ENCODE measurements at regions of chr7 and their contacts with region 1.

Region 1: DNA sequence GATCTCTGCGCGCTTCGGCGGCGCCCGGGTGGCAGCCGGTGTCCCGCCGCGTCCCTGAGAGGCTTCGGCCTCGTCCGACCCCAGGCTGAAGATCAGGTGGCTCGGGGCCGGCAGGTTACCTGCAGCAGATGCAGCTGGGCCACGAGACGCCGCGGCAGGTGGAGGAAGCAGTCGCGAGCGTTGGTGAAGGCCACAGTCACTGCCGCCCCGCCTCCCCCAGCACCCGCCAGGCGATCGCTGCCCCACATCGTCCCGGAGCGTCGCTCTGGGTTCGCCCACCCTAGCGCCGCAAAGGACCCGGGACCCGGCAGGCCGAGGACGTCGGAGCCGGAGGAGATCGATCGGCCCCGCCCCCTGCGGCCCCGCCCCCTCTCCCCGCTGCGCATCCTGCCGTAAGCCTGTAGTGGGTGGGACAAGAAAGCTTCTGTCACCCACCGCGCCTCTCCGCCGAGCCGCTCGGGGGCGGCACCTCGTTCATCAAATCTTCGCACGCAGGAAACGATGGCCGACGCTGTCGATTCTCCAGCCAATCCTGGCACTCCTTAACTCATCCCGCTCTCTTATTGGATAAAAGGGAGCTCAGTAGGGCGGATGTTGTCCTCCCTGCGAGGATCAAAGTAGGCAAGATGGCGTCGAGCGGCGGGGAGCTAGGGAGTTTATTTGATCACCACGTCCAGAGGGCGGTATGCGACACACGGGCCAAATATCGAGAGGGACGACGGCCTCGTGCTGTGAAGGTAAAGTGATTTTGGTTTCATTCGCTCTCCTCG is at the starts of genes PEX1 and RBM48:
- DNase-seq: peak; percentile 93 to 98 (median 98)
- H3K4me3 ChIP-seq: peak within 1 kb of the TSS; percentile 92 to 97
- H3K4me3 Mint-ChIP-seq: peak within 1 kb of the TSS; percentile 93 to 99 (median 96)
- H3K27ac ChIP-seq: peak within 1 kb of the TSS; percentile 91
- H3K27ac Mint-ChIP-seq: peak within 1 kb of the TSS; percentile 87 to 100 (median 98)
- H3K4me1 ChIP-seq: peaks cover 33% of the 10 kb centered on the region
- H3K4me1 Mint-ChIP-seq: peaks cover 31 to 52% (median 38%) of the 10 kb centered on the region in 4 donors
- H3K27me3 ChIP-seq: no peaks in the 10 kb centered on the region
- H3K27me3 Mint-ChIP-seq: no peaks in the 10 kb centered on the region
- total RNA-seq, gene PEX1: 35.4 to 38.0 TPM
- total RNA-seq, gene RBM48: 37.5 to 37.9 TPM

Region 2: GRCh38 chr7:91940572-91941341 is 587.6 kb before region 1 on chr7 and contains the start of gene AKAP9:
- CTCF ChIA-PET with region 1: no interaction called
- POLR2A ChIA-PET with region 1: interaction called, 18 read pairs
- intact Hi-C with region 1: loop called (anchors 2 kb)
- DNase-seq: peak; percentile 88 to 90 (median 89)
- H3K4me3 ChIP-seq: peak within 1 kb of the TSS; percentile 75 to 92
- H3K4me3 Mint-ChIP-seq: peak within 1 kb of the TSS; percentile 91 to 100 (median 96)
- H3K27ac ChIP-seq: peak within 1 kb of the TSS; percentile 92
- H3K27ac Mint-ChIP-seq: peak within 1 kb of the TSS; percentile 94 to 100 (median 98)
- H3K4me1 ChIP-seq: peaks cover 39% of the 10 kb centered on the region
- H3K4me1 Mint-ChIP-seq: peaks cover 22 to 59% (median 37%) of the 10 kb centered on the region in 4 donors
- H3K27me3 ChIP-seq: no peaks in the 10 kb centered on the region
- H3K27me3 Mint-ChIP-seq: peaks cover 0 to 1% of the 10 kb centered on the region in 2 donors
- total RNA-seq, gene AKAP9: 88.5 to 91.4 TPM

Region 3: DNA sequence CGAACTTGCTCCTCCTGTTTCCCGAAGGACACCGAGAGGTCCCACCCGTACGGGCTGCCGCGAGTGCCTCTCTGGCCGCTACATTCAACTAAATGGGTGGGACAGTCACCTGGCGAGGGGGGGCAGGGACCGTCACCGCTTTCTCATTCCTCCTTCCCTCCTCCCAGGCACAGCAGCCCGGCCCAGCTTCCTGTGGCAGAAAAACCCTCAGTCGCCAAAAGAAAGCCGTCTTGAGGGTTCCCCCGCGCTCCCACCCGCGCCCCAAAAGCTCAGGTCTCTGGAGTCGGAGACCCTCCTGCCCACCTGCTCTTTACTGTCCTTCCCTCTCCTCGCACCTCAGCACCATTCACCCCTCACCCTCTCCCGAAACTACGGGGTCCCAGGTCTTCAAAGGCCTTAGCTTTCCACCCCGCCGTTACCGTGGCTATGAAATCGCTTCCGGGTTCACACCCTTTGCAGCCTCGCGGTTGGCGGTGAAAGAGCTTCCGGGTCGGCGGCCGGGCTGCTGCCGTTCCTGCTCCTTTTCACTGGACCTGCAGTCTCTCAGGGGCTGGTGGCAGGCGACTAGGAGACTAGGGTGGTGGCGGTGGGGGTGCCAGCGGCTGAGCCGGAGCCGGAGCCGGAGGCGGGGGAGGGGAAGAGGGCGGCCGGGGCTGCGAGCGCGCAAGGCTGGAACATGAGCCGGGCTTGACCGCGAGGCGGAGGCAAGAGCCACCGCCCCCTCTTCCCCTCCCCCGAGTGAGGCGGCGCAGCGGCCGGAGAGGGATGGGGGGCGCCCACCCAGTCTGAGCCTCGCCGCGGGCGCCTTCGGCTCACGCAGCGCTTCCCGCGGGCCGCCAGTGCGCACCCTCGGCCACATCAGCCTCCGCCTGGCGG is 282.6 kb before region 1 on chr7 and contains the starts of genes ANKIB1 and KRIT1:
- CTCF ChIA-PET with region 1: interaction called, 4 read pairs
- POLR2A ChIA-PET with region 1: interaction called, 13 read pairs
- intact Hi-C with region 1: loop called (anchors 1 kb)
- DNase-seq: peak; percentile 86 to 91 (median 88)
- H3K4me3 ChIP-seq: peak within 1 kb of the TSS; percentile 91 to 98
- H3K4me3 Mint-ChIP-seq: peak within 1 kb of the TSS; percentile 94 to 100 (median 99)
- H3K27ac ChIP-seq: peak within 1 kb of the TSS; percentile 97
- H3K27ac Mint-ChIP-seq: peak within 1 kb of the TSS; percentile 98 to 100 (median 100)
- H3K4me1 ChIP-seq: peaks cover 43% of the 10 kb centered on the region
- H3K4me1 Mint-ChIP-seq: peaks cover 26 to 49% (median 37%) of the 10 kb centered on the region in 4 donors
- H3K27me3 ChIP-seq: no peaks in the 10 kb centered on the region
- H3K27me3 Mint-ChIP-seq: no peaks in the 10 kb centered on the region
- total RNA-seq, gene ANKIB1: 77.7 to 78.5 TPM
- total RNA-seq, gene KRIT1: 66.0 to 80.7 TPM

Region 4: GRCh38 chr7:92517631-92518030 is 10.7 kb before region 1 on chr7:
- CTCF ChIA-PET with region 1: interaction called, 10 read pairs
- POLR2A ChIA-PET with region 1: interaction called, 4 read pairs
- intact Hi-C with region 1: no loop called
- DNase-seq: no peak
- H3K4me3 ChIP-seq: no peak overlapping the region
- H3K4me3 Mint-ChIP-seq: no peak overlapping the region
- H3K27ac ChIP-seq: no peak overlapping the region
- H3K27ac Mint-ChIP-seq: peak overlapping the region in 1 of 7 donors; percentile 53
- H3K4me1 ChIP-seq: no peaks in the 10 kb centered on the region
- H3K4me1 Mint-ChIP-seq: peaks cover 0 to 7% (median 2%) of the 10 kb centered on the region in 4 donors
- H3K27me3 ChIP-seq: no peaks in the 10 kb centered on the region
- H3K27me3 Mint-ChIP-seq: no peaks in the 10 kb centered on the region

Region 5: GRCh38 chr7:92609921-92610518 is 81.6 kb after region 1 on chr7:
- CTCF ChIA-PET with region 1: interaction called, 7 read pairs
- POLR2A ChIA-PET with region 1: interaction called, 5 read pairs
- intact Hi-C with region 1: loop called (anchors 1 kb)
- DNase-seq: peak in 2 of 5 donors; percentile 19 to 27
- H3K4me3 ChIP-seq: no peak overlapping the region
- H3K4me3 Mint-ChIP-seq: no peak overlapping the region
- H3K27ac ChIP-seq: no peak overlapping the region
- H3K27ac Mint-ChIP-seq: peak overlapping the region in 4 of 7 donors; percentile 24 to 62 (median 38)
- H3K4me1 ChIP-seq: peaks cover 9% of the 10 kb centered on the region
- H3K4me1 Mint-ChIP-seq: peaks cover 4 to 9% (median 6%) of the 10 kb centered on the region in 4 donors
- H3K27me3 ChIP-seq: no peaks in the 10 kb centered on the region
- H3K27me3 Mint-ChIP-seq: no peaks in the 10 kb centered on the region

Region 6: GRCh38 chr7:92641921-92642511 is 113.6 kb after region 1 on chr7:
- CTCF ChIA-PET with region 1: no interaction called
- POLR2A ChIA-PET with region 1: no interaction called
- intact Hi-C with region 1: no loop called
- DNase-seq: peak in 1 of 5 donors; percentile 72
- H3K4me3 ChIP-seq: no peak overlapping the region
- H3K4me3 Mint-ChIP-seq: peak overlapping the region; percentile 23 to 75 (median 60)
- H3K27ac ChIP-seq: peak overlapping the region; percentile 48
- H3K27ac Mint-ChIP-seq: peak overlapping the region; percentile 86 to 95 (median 92)
- H3K4me1 ChIP-seq: peaks cover 44% of the 10 kb centered on the region
- H3K4me1 Mint-ChIP-seq: peaks cover 46 to 77% (median 58%) of the 10 kb centered on the region in 4 donors
- H3K27me3 ChIP-seq: no peaks in the 10 kb centered on the region
- H3K27me3 Mint-ChIP-seq: no peaks in the 10 kb centered on the region

Region 7: GRCh38 chr7:93117852-93118530 is 589.6 kb after region 1 on chr7 and contains the start of gene SAMD9:
- CTCF ChIA-PET with region 1: interaction called, 7 read pairs
- POLR2A ChIA-PET with region 1: interaction called, 27 read pairs
- intact Hi-C with region 1: loop called (anchors 2 kb)
- DNase-seq: peak; percentile 71 to 89 (median 82)
- H3K4me3 ChIP-seq: peak within 1 kb of the TSS; percentile 65 to 96
- H3K4me3 Mint-ChIP-seq: peak within 1 kb of the TSS; percentile 88 to 94 (median 91)
- H3K27ac ChIP-seq: peak within 1 kb of the TSS; percentile 75
- H3K27ac Mint-ChIP-seq: peak within 1 kb of the TSS; percentile 80 to 96 (median 95)
- H3K4me1 ChIP-seq: peaks cover 37% of the 10 kb centered on the region
- H3K4me1 Mint-ChIP-seq: peaks cover 33 to 60% (median 49%) of the 10 kb centered on the region in 4 donors
- H3K27me3 ChIP-seq: no peaks in the 10 kb centered on the region
- H3K27me3 Mint-ChIP-seq: no peaks in the 10 kb centered on the region
- total RNA-seq, gene SAMD9: 55.1 to 56.6 TPM

Measured in CD4-positive, alpha-beta memory T cell (primary cell).